MCF 10A (cell line): ENCODE measurements at regions of chr1 and their contacts with region 1.

Region 1: DNA sequence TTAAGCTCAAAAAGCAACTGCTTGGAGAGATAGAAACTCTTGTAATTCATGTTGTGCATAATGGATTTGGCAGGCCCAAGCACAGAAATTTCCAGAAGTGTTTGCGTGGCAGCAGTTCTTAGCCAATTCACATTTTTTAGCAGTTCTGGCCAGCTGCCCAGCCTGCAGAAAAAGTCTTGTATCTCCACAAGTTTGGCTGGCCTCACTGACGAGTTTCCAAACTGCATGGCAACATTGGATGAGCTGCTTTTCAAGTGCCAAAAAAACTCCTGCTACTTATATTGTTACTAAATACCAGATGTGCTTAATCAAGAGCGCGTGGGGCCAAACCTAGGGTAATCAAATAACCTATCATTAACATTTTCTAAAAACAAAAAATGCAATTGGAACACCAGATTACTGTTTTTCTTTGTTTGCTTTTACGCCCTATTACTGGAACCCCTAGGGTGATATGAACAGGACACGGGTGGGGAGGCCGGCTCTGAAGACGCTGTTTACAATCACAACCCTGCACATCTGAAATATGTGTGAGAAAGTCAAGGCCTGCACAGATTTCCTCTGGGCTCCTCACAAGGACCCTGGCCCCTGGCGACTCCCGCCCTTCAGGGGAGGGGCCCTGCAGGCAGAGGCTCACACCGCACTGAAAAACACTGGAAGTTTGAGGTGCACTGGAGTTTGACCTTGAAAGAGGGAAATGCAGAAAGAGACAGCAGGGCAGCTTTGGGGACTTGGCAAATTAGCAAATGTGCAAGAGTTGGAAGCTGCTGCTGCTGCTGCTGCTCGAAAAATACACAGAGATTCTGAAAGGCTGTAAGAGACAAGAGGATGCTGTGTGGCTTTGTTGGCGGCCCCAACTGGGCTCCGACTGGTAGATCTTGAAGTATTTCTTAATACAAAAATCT is 55.2 kb upstream of the TARBP1 start:
- DNase-seq: peak; percentile 100
- H3K4me3 Mint-ChIP-seq: peak overlapping the region; percentile 31
- H3K27ac Mint-ChIP-seq: peak overlapping the region; percentile 93
- H3K4me1 Mint-ChIP-seq: peaks cover 43% of the 10 kb centered on the region
- H3K27me3 Mint-ChIP-seq: no peaks in the 10 kb centered on the region
- CTCF ChIP-seq: no peak

Region 2: GRCh38 chr1:234515821-234516241 is 18.4 kb before region 1 on chr1:
- CTCF ChIA-PET with region 1: interaction called, 18 read pairs
- POLR2A ChIA-PET with region 1: interaction called, 443 read pairs
- intact Hi-C with region 1: no loop called
- DNase-seq: peak; percentile 76
- H3K4me3 Mint-ChIP-seq: no peak overlapping the region
- H3K27ac Mint-ChIP-seq: peak overlapping the region; percentile 80
- H3K4me1 Mint-ChIP-seq: peaks cover 27% of the 10 kb centered on the region
- H3K27me3 Mint-ChIP-seq: no peaks in the 10 kb centered on the region
- CTCF ChIP-seq: no peak

Region 3: DNA sequence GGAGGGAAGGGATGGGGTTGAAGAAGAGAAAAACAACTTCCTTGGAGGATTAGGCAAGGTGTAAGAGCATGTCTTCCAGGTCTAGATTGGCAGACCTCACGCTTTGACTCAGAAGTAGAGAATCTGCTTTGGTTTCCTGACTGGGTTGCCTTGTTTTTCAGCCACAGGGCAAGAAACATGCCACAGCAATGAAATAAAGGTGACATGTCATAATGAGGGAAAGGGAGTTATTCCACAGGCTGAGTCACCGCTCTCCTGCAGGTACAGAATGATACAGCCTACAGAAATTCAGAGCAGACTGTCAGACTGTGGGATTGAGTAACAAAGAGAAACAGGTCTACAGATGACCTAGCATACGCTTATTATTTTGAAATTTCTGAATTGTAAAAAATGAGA is 30.4 kb after region 1 on chr1:
- CTCF ChIA-PET with region 1: interaction called, 3 read pairs
- POLR2A ChIA-PET with region 1: interaction called, 130 read pairs
- intact Hi-C with region 1: loop called (anchors 1 kb)
- DNase-seq: peak; percentile 100
- H3K4me3 Mint-ChIP-seq: no peak overlapping the region
- H3K27ac Mint-ChIP-seq: peak overlapping the region; percentile 80
- H3K4me1 Mint-ChIP-seq: peaks cover 25% of the 10 kb centered on the region
- H3K27me3 Mint-ChIP-seq: no peaks in the 10 kb centered on the region
- CTCF ChIP-seq: no peak

Region 4: DNA sequence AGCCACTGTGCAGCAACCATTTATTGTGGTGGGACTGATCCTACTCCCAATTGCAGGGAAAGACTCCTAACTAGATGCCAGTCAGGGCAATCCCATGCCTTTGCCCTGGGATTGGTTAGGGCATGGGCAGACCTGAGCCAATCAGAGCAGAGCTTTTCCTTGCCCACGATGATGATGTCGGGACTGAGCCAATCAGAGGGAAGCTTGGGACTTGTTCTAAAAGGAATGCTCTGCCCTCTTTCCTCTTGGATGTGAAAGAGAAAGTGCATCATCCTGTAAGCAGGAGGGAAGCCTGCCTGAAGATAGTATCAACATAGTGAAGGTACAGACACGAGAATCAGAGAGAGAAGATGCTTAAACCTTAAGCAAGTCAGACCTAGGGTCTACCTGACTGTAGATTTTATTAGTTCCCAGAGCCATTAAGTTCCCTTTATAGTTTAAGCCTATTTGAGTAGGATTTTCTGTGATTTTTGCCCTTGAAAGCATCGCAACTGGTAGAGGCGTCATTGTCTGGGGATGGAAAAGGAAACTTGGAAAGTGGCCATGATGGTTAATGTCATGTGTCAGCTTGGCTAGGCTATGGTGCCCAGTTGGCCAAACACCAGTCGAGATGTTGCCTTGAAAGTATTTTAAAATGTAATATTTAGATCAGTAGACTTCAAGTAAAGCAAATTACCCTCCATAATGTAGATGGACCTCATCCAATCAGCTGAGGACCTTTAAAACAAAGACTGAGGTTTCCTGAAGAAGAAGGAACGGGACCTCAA is 55.8 kb after region 1 on chr1:
- CTCF ChIA-PET with region 1: interaction called, 7 read pairs
- POLR2A ChIA-PET with region 1: interaction called, 17 read pairs
- intact Hi-C with region 1: no loop called
- DNase-seq: peak; percentile 72
- H3K4me3 Mint-ChIP-seq: no peak overlapping the region
- H3K27ac Mint-ChIP-seq: peak overlapping the region; percentile 47
- H3K4me1 Mint-ChIP-seq: peaks cover 27% of the 10 kb centered on the region
- H3K27me3 Mint-ChIP-seq: no peaks in the 10 kb centered on the region
- CTCF ChIP-seq: no peak

Region 5: GRCh38 chr1:235067263-235068172 is 533.3 kb after region 1 on chr1:
- CTCF ChIA-PET with region 1: interaction called, 6 read pairs
- POLR2A ChIA-PET with region 1: interaction called, 49 read pairs
- intact Hi-C with region 1: no loop called
- DNase-seq: peak; percentile 100
- H3K4me3 Mint-ChIP-seq: peak overlapping the region; percentile 54
- H3K27ac Mint-ChIP-seq: peak overlapping the region; percentile 97
- H3K4me1 Mint-ChIP-seq: peaks cover 53% of the 10 kb centered on the region
- H3K27me3 Mint-ChIP-seq: no peaks in the 10 kb centered on the region
- CTCF ChIP-seq: no peak